ENCODE measurements at regions of chr1 and their contacts with region 1.

Region 1: DNA sequence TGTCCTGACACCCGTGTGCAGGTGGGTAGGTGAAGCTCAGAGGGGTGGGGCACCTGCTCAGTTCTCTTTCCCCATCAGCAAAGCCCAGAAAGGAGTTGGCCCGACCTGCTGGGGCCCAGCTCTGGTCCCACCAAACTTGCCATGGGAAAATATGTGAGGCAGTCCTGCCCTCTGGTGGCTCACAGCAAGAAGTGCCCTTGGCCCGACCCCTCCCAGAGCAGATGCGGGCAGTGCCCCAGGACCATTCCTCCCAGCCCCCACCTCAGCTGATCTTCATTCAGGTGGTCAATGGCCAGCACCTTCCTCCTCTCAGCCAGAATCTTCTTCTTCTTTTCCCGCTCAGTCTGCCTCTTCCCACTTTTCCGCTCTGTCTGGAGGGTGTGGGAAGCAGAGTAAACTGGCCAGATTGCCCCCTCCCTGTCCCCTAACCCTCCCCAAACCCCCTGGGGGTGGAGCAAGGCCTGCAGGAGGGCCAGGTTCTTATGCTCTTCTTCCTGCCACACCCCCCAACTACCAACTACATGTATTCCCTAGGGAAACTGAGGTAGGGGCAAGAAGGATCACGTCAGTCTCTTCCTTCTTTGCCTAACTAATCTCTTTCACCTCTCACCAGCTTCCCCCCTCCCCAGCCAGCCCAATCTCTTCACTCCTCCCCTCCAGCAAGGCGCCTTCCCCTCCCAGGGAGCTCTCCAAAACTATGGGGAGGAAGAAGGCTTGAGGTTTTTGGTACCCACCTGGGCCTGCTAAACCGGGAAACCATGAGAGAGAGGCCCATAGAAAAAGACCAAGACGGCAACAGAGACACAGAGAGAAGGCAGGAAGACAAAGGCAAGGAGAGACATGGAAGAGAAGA is 15.6 kb downstream of the TNNT2 start:
- DNase-seq: peak; percentile 85
- ATAC-seq: peak; percentile 89
- H3K4me3 Mint-ChIP-seq: no peak overlapping the region
- H3K27ac Mint-ChIP-seq: no peak overlapping the region
- H3K4me1 Mint-ChIP-seq: peaks cover 18% of the 10 kb centered on the region
- H3K27me3 Mint-ChIP-seq: peaks cover 3% of the 10 kb centered on the region; the same call in 1 of the 2 replicates
- CTCF ChIP-seq: peak; percentile 90

Region 2: GRCh38 chr1:201126832-201127754 is 234.8 kb before region 1 on chr1 and contains the start of gene ASCL5:
- CTCF ChIA-PET with region 1: no interaction called
- POLR2A ChIA-PET with region 1: no interaction called
- DNase-seq: peak; percentile 57
- ATAC-seq: peak; percentile 92
- H3K4me3 Mint-ChIP-seq: no peak within 1 kb of the TSS
- H3K27ac Mint-ChIP-seq: no peak within 1 kb of the TSS
- H3K4me1 Mint-ChIP-seq: peaks cover 10% of the 10 kb centered on the region
- H3K27me3 Mint-ChIP-seq: peaks cover 2% of the 10 kb centered on the region; the same call in 1 of the 2 replicates
- CTCF ChIP-seq: no peak
- total RNA-seq, gene ASCL5: 0.18 to 0.53 TPM (median 0.31 TPM) in 3 replicates

Region 3: DNA sequence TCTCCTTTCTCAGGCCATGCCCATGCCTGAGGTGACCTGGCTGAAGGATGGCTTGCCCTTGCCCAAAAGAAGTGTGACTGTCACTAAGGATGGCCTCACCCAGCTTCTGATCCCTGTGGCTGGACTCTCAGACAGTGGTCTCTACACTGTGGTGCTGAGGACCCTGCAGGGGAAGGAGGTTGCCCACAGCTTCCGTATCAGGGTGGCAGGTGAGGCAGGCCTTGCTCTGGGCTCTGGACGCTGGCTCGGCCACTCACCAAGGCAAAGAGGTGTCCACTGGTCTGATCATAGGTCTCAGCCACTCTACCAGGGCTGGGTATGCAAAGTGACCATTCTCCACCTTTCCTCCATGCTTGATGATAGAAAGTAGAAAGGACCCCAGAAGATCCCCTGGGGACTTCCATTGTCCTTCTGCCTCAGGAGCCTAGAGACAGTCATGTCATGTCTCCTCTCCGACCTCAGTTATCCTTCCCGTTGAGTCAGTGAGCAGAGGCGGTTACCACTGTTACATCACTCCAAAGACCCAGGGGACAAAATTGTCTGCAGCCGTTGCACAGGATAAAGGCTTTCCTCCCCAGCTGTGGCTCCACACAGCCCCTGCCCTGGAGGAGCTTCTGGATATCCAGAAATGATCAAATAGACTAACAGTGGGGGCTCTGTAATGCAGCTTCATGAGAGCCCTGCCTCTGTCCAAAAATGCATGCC is 137.1 kb before region 1 on chr1:
- CTCF ChIA-PET with region 1: interaction called, 15 read pairs
- POLR2A ChIA-PET with region 1: no interaction called
- DNase-seq: no peak
- ATAC-seq: no peak
- H3K4me3 Mint-ChIP-seq: no peak overlapping the region
- H3K27ac Mint-ChIP-seq: no peak overlapping the region
- H3K4me1 Mint-ChIP-seq: no peaks in the 10 kb centered on the region
- H3K27me3 Mint-ChIP-seq: peaks cover 5% of the 10 kb centered on the region
- CTCF ChIP-seq: no peak

Region 4: DNA sequence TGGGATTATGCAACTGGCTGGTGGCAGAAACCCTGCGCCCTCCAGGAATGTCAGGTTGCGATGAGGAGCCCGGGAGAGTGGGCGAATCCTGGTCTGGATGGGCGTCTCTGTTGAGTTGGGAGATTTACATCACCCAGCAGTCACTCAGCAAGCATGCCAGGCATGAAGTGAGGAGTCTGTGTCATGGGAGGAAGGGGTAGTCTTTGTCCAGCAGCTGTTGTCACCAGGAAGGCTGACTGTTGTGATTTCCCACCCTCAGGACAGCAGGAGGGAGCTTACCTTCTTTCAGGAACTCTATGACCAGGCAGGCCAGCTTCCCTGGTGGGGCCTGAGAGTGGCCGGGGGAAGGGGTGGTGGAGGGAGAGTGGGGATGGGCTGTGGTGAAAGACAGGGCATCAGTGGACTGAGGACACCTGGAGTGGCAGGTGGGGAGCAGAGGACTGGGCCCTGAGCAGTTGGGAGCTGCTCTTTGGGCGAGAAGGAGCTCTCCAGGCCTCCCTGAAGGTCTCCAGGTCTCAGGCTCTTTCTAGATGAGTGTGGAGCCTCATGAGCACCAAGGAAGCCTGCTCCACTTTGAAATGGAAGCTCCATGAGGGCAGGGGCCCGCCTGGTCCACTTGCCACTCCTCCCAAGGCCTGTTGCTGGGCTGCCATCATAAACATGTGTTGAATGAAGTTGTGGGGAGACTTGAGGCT is 100.0 kb before region 1 on chr1:
- CTCF ChIA-PET with region 1: interaction called, 62 read pairs
- POLR2A ChIA-PET with region 1: interaction called, 3 read pairs
- DNase-seq: no peak
- ATAC-seq: no peak
- H3K4me3 Mint-ChIP-seq: no peak overlapping the region
- H3K27ac Mint-ChIP-seq: no peak overlapping the region
- H3K4me1 Mint-ChIP-seq: peaks cover 14% of the 10 kb centered on the region
- H3K27me3 Mint-ChIP-seq: peaks cover 11% of the 10 kb centered on the region
- CTCF ChIP-seq: no peak

Region 5: GRCh38 chr1:201309426-201309825 is 52.5 kb before region 1 on chr1:
- CTCF ChIA-PET with region 1: interaction called, 37 read pairs
- POLR2A ChIA-PET with region 1: no interaction called
- DNase-seq: peak; percentile 78
- ATAC-seq: peak; percentile 92
- H3K4me3 Mint-ChIP-seq: no peak overlapping the region
- H3K27ac Mint-ChIP-seq: no peak overlapping the region
- H3K4me1 Mint-ChIP-seq: peaks cover 12% of the 10 kb centered on the region
- H3K27me3 Mint-ChIP-seq: peaks cover 32% of the 10 kb centered on the region
- CTCF ChIP-seq: no peak

Region 6: GRCh38 chr1:201376464-201377374 is 14.8 kb after region 1 on chr1:
- CTCF ChIA-PET with region 1: interaction called, 82 read pairs
- POLR2A ChIA-PET with region 1: interaction called, 4 read pairs
- DNase-seq: peak; percentile 86
- ATAC-seq: peak; percentile 81
- H3K4me3 Mint-ChIP-seq: peak overlapping the region; percentile 58
- H3K27ac Mint-ChIP-seq: peak overlapping the region; percentile 98
- H3K4me1 Mint-ChIP-seq: peaks cover 54% of the 10 kb centered on the region
- H3K27me3 Mint-ChIP-seq: peaks cover 7% of the 10 kb centered on the region; the same call in 1 of the 2 replicates
- CTCF ChIP-seq: peak; percentile 56